SK-N-SH (cell line): ENCODE measurements at regions of chr1 and their contacts with region 1.

Region 1: DNA sequence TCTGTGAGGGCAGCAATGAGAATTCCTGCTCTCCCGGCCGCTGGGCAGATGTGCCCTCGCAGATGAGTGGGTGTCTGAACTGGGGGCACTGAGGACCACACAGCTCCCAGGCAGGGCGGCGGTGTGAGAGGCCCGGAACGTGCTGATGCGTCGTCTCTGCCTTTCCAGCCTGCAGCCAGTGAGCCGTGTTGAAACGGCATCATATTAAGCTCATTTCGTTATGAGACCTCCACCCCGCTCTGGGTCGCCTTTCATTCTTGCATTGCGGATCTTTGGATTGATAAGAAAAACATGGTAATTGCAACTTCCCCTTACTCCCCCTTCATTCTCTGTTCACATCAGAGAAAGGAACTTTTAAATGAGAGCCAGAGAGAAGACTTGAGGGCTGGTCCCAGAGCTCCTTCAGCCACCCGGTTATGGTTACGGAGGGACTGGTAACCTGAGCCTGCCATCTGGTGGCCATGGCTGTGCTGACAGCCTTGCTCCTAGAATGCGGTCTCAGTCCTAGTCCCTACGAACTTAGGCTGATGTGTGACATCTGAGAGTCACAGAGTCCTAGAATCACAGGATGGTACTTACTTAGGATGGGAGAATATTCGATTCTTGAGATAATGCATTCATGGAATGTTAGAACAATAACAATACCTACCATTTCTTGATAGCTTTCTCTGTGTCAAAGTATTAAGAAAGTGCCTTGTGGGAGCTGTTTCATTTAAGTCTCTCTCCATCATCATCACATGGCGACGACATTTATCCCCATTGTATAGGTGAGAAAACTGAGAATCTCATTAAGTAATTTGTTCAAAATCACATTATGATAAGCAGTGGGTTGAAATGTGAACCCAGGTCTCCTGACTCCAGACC is 271.0 kb downstream of the TRABD2B start:
- DNase-seq: peak; percentile 89
- H3K4me3 ChIP-seq: peak overlapping the region; percentile 15 to 57; a peak in 3 of 4 replicates
- H3K27ac ChIP-seq: no peak overlapping the region
- H3K4me1 ChIP-seq: peaks cover 0 to 9% of the 10 kb centered on the region in 2 experiments; a peak in 1 of 4 replicates
- H3K27me3 ChIP-seq: peaks cover 28% of the 10 kb centered on the region
- CTCF ChIP-seq: peak; percentile 87
- EP300 ChIP-seq: no peak
- RAD21 ChIP-seq: peak; percentile 87

Region 2: GRCh38 chr1:47437447-47438164 is 288.6 kb before region 1 on chr1 and contains the start of gene FOXD2:
- CTCF ChIA-PET with region 1: interaction called, 1,422 read pairs
- POLR2A ChIA-PET with region 1: no interaction called
- DNase-seq: peak; percentile 96
- H3K4me3 ChIP-seq: peak within 1 kb of the TSS; percentile 49 to 87
- H3K27ac ChIP-seq: no peak within 1 kb of the TSS
- H3K4me1 ChIP-seq: peaks cover 0 to 10% of the 10 kb centered on the region in 2 experiments; a peak in 1 of 4 replicates
- H3K27me3 ChIP-seq: peaks cover 82% of the 10 kb centered on the region
- CTCF ChIP-seq: peak; percentile 84
- EP300 ChIP-seq: no peak
- RAD21 ChIP-seq: peak; percentile 19; the same call in 1 of the 2 replicates
- polyA plus RNA-seq, gene FOXD2: not detected in 2 replicates

Region 3: GRCh38 chr1:47495176-47495713 is 231.0 kb before region 1 on chr1:
- CTCF ChIA-PET with region 1: interaction called, 11 read pairs
- POLR2A ChIA-PET with region 1: no interaction called
- DNase-seq: no peak
- H3K4me3 ChIP-seq: no peak overlapping the region
- H3K27ac ChIP-seq: no peak overlapping the region
- H3K4me1 ChIP-seq: no peaks in the 10 kb centered on the region
- H3K27me3 ChIP-seq: peaks cover 3% of the 10 kb centered on the region; the same call in 1 of the 2 replicates
- CTCF ChIP-seq: no peak
- EP300 ChIP-seq: no peak
- RAD21 ChIP-seq: no peak

Region 4: GRCh38 chr1:47532921-47533792 is 193.1 kb before region 1 on chr1:
- CTCF ChIA-PET with region 1: interaction called, 17 read pairs
- POLR2A ChIA-PET with region 1: no interaction called
- DNase-seq: peak; percentile 89
- H3K4me3 ChIP-seq: peak overlapping the region; percentile 40 to 62
- H3K27ac ChIP-seq: peak overlapping the region in 1 of 2 experiments; percentile 4; a peak in 1 of 4 replicates
- H3K4me1 ChIP-seq: peaks cover 5 to 14% of the 10 kb centered on the region in 2 experiments; a peak in 2 of 4 replicates
- H3K27me3 ChIP-seq: 0 out of 2 replicates have a peak, but pooled peaks cover 11% of the 10 kb centered on the region
- CTCF ChIP-seq: no peak
- EP300 ChIP-seq: peak; percentile 50 to 83; a peak in 3 of 4 replicates
- RAD21 ChIP-seq: peak; percentile 17; the same call in 1 of the 2 replicates

Region 5: DNA sequence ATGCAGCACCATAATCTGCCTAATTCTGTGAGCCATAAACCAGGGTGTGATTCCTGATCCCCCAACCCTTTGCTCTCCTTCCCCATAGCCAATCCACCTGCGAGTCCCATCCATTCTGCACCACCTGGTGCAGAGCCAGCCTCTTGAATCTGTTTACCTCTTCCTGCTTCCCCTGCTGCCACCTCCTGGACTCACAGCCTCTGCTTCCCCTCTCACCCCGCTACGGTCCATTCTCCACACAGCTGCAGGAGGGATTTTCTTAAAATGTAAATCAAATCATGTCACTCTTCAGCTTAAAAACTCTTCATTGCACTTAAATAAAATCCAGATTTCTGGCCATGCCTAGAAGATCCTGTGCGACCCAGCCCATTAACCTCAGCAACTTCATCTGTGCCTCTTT is 101.7 kb before region 1 on chr1:
- CTCF ChIA-PET with region 1: no interaction called
- POLR2A ChIA-PET with region 1: no interaction called
- DNase-seq: no peak
- H3K4me3 ChIP-seq: no peak overlapping the region
- H3K27ac ChIP-seq: no peak overlapping the region
- H3K4me1 ChIP-seq: peaks cover 0 to 29% of the 10 kb centered on the region in 2 experiments; a peak in 1 of 4 replicates
- H3K27me3 ChIP-seq: no peaks in the 10 kb centered on the region
- CTCF ChIP-seq: no peak
- EP300 ChIP-seq: no peak
- RAD21 ChIP-seq: peak; percentile 7; the same call in 1 of the 2 replicates

Region 6: GRCh38 chr1:47703981-47704596 is 22.1 kb before region 1 on chr1:
- CTCF ChIA-PET with region 1: interaction called, 269 read pairs
- POLR2A ChIA-PET with region 1: no interaction called
- DNase-seq: no peak
- H3K4me3 ChIP-seq: no peak overlapping the region
- H3K27ac ChIP-seq: no peak overlapping the region
- H3K4me1 ChIP-seq: peaks cover 0 to 11% of the 10 kb centered on the region in 2 experiments; a peak in 1 of 4 replicates
- H3K27me3 ChIP-seq: peaks cover 26% of the 10 kb centered on the region
- CTCF ChIP-seq: peak; percentile 43
- EP300 ChIP-seq: no peak
- RAD21 ChIP-seq: peak; percentile 63

Region 7: DNA sequence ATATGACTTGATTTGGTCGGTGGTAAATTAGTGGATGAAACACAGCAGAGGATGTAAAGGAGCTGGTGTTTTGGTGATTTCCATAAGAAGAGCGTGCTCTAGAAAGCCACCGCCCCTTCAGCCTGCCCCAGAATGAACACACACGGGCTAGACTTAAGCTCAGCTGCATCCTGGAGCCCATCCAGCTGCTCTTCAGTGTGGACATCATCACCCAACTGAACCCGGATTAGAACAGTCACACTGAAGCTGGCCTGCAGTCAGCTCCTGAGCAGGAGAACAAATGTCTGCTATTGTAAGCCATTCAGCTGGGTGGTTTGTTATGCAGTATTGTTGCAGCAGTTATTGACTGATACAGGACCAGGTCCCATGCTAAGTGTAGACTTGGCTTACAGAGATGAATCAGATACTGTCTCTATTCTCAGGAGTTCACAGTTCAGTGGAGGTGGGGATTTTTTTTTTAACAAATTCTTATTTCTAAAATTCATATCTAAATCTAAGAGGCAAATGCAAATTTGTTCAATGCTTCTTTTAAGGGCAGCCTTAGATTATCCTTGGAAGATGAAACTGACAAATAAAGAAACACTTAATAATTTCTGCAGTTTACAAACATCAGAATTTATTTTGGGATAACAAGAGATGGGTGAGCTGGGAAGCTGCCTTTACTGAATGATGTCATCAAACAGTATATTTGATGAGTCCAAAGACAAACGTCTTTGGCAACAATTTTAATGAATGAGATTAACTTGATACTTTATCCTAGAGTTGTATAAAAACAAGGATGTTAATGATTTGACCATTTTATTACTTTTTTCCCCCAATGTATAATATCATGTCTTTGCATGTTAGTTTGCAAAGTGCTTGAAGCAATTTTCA is 19.7 kb after region 1 on chr1:
- CTCF ChIA-PET with region 1: interaction called, 44 read pairs
- POLR2A ChIA-PET with region 1: no interaction called
- DNase-seq: no peak
- H3K4me3 ChIP-seq: no peak overlapping the region
- H3K27ac ChIP-seq: no peak overlapping the region
- H3K4me1 ChIP-seq: no peaks in the 10 kb centered on the region
- H3K27me3 ChIP-seq: no peaks in the 10 kb centered on the region; the same call in 1 of the 2 replicates
- CTCF ChIP-seq: no peak
- EP300 ChIP-seq: no peak
- RAD21 ChIP-seq: no peak

Region 8: GRCh38 chr1:47997289-47998200 is 271.3 kb after region 1 on chr1 and contains the start of gene TRABD2B:
- CTCF ChIA-PET with region 1: interaction called, 18 read pairs
- POLR2A ChIA-PET with region 1: no interaction called
- DNase-seq: peak; percentile 96
- H3K4me3 ChIP-seq: peak within 1 kb of the TSS; percentile 56 to 65
- H3K27ac ChIP-seq: no peak within 1 kb of the TSS
- H3K4me1 ChIP-seq: peaks cover 0 to 3% of the 10 kb centered on the region in 2 experiments; a peak in 1 of 4 replicates
- H3K27me3 ChIP-seq: peaks cover 4% of the 10 kb centered on the region; the same call in 1 of the 2 replicates
- CTCF ChIP-seq: peak; percentile 92
- EP300 ChIP-seq: no peak
- RAD21 ChIP-seq: peak; percentile 73
- polyA plus RNA-seq, gene TRABD2B: 0.02 and 0.03 TPM in 2 replicates